ENCODE measurements at regions of chr2 and their contacts with region 1.

Region 1: GRCh38 chr2:217785544-217786045 is 217.2 kb downstream of the TNS1 start:
- DNase-seq: peak; percentile 75
- ATAC-seq: peak; percentile 58
- H3K4me3 Mint-ChIP-seq: no peak overlapping the region
- H3K27ac Mint-ChIP-seq: no peak overlapping the region
- H3K4me1 Mint-ChIP-seq: peaks cover 18% of the 10 kb centered on the region
- H3K27me3 Mint-ChIP-seq: no peaks in the 10 kb centered on the region
- CTCF ChIP-seq: peak; percentile 80

Region 2: GRCh38 chr2:217798743-217799562 is 13.4 kb after region 1 on chr2:
- CTCF ChIA-PET with region 1: interaction called, 14 read pairs
- POLR2A ChIA-PET with region 1: no interaction called
- intact Hi-C with region 1: no loop called
- DNase-seq: no peak
- ATAC-seq: peak; percentile 95
- H3K4me3 Mint-ChIP-seq: no peak overlapping the region
- H3K27ac Mint-ChIP-seq: peak overlapping the region; percentile 61
- H3K4me1 Mint-ChIP-seq: peaks cover 17% of the 10 kb centered on the region
- H3K27me3 Mint-ChIP-seq: no peaks in the 10 kb centered on the region
- CTCF ChIP-seq: no peak

Region 3: GRCh38 chr2:217886720-217887309 is 101.2 kb after region 1 on chr2:
- CTCF ChIA-PET with region 1: interaction called, 235 read pairs
- POLR2A ChIA-PET with region 1: interaction called, 7 read pairs
- intact Hi-C with region 1: loop called (anchors 1 kb)
- DNase-seq: peak; percentile 47
- ATAC-seq: peak; percentile 71
- H3K4me3 Mint-ChIP-seq: no peak overlapping the region
- H3K27ac Mint-ChIP-seq: no peak overlapping the region
- H3K4me1 Mint-ChIP-seq: peaks cover 18% of the 10 kb centered on the region
- H3K27me3 Mint-ChIP-seq: no peaks in the 10 kb centered on the region
- CTCF ChIP-seq: peak; percentile 27

Region 4: GRCh38 chr2:217993817-217994463 is 208.3 kb after region 1 on chr2:
- CTCF ChIA-PET with region 1: interaction called, 39 read pairs
- POLR2A ChIA-PET with region 1: interaction called, 3 read pairs
- intact Hi-C with region 1: loop called (anchors 1 kb)
- DNase-seq: peak; percentile 36
- ATAC-seq: peak; percentile 42
- H3K4me3 Mint-ChIP-seq: no peak overlapping the region
- H3K27ac Mint-ChIP-seq: no peak overlapping the region
- H3K4me1 Mint-ChIP-seq: no peaks in the 10 kb centered on the region
- H3K27me3 Mint-ChIP-seq: peaks cover 15% of the 10 kb centered on the region
- CTCF ChIP-seq: no peak

Region 5: DNA sequence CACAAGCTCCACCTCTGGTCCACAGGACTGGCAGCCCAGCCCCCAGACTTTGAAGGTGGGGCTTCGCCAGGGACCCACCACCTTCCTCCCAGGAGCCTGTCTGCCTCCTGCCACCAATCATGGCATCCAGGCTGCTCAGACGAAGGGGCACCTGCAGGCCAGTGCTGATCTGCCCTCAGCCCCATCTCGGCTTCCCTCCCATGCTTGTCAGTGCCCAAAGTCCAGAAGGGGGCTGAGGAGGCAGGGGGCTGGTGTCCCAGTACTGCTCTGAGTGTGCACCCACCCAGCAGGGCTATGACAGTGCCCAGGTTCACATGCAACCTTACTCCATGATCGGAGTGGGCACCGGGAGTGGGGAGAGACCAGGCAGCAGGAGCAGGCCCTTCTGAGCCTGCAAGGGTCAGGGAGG is 258.1 kb after region 1 on chr2:
- CTCF ChIA-PET with region 1: interaction called, 10 read pairs
- POLR2A ChIA-PET with region 1: no interaction called
- intact Hi-C with region 1: no loop called
- DNase-seq: no peak
- ATAC-seq: no peak
- H3K4me3 Mint-ChIP-seq: no peak overlapping the region
- H3K27ac Mint-ChIP-seq: no peak overlapping the region
- H3K4me1 Mint-ChIP-seq: peaks cover 7% of the 10 kb centered on the region
- H3K27me3 Mint-ChIP-seq: peaks cover 15% of the 10 kb centered on the region
- CTCF ChIP-seq: no peak

Measured in activated B cell treated with CpG ODN at 0.5 μM for 24 hours (primary cell).